IMR-90 (cell line): ENCODE measurements at regions of chr18 and their contacts with region 1.

Region 1: GRCh38 chr18:22314420-22314819 is 103.3 kb downstream of the CTAGE1 start:
- DNase-seq: peak; percentile 97
- ATAC-seq: peak; percentile 96
- H3K4me3 ChIP-seq: peak overlapping the region; percentile 12; the same call in 1 of the 2 replicates
- H3K27ac ChIP-seq: peak overlapping the region; percentile 85
- H3K4me1 ChIP-seq: peaks cover 12% of the 10 kb centered on the region
- H3K27me3 ChIP-seq: no peaks in the 10 kb centered on the region
- CTCF ChIP-seq: no peak
- POLR2A ChIP-seq: no peak; the same call in 1 of the 2 replicates
- RAD21 ChIP-seq: peak; percentile 32

Region 2: DNA sequence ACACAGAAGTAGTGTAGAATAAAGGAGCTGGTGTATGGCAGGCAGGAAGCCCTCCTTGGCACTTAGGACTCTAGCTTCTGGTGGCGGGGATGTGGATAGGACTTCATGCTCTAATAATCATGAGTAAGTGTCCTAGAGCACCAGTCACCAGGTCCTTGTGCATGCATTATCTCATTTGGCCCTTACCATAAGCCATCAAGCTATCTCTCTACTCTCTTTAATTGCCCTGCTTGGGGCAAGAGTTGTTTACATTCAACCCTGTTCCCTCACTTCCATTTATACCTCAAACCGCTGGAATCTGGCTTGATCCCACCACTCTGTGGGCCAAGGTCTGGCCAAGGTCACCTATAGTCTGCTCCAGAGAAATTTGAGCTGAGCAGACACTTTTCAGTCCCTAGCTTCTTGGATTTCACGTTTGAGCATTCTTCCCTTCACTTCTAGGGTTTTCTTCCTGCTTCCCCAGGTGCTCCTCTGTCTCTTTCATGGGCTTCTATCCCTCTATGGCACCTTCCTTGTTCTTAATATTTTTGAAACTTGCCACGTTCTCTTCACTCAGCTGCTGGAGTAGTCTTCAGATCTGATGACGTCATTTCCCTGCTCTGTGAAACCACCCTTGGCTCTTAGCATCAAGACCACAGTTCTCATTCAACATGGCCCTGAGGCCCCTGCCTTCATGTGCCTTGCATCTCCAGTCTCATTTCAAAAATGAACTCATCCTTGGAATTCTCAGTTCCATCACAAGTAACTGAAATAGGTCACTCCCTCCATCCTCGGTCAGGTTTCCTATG is 239.9 kb before region 1 on chr18:
- CTCF ChIA-PET with region 1: no interaction called
- POLR2A ChIA-PET with region 1: no interaction called
- dilution Hi-C with region 1: no loop called
- in situ Hi-C with region 1: no loop called
- intact Hi-C with region 1: no loop called
- DNase-seq: no peak
- ATAC-seq: no peak
- H3K4me3 ChIP-seq: no peak overlapping the region
- H3K27ac ChIP-seq: no peak overlapping the region
- H3K4me1 ChIP-seq: no peaks in the 10 kb centered on the region
- H3K27me3 ChIP-seq: peaks cover 20% of the 10 kb centered on the region
- CTCF ChIP-seq: no peak
- POLR2A ChIP-seq: no peak
- RAD21 ChIP-seq: no peak

Region 3: GRCh38 chr18:22194151-22194598 is 120.2 kb before region 1 on chr18:
- CTCF ChIA-PET with region 1: no interaction called
- POLR2A ChIA-PET with region 1: no interaction called
- dilution Hi-C with region 1: no loop called
- in situ Hi-C with region 1: no loop called
- intact Hi-C with region 1: loop called (anchors 5 kb)
- DNase-seq: no peak
- ATAC-seq: no peak
- H3K4me3 ChIP-seq: no peak overlapping the region
- H3K27ac ChIP-seq: no peak overlapping the region
- H3K4me1 ChIP-seq: peaks cover 6% of the 10 kb centered on the region
- H3K27me3 ChIP-seq: no peaks in the 10 kb centered on the region
- CTCF ChIP-seq: no peak
- POLR2A ChIP-seq: no peak
- RAD21 ChIP-seq: no peak

Region 4: DNA sequence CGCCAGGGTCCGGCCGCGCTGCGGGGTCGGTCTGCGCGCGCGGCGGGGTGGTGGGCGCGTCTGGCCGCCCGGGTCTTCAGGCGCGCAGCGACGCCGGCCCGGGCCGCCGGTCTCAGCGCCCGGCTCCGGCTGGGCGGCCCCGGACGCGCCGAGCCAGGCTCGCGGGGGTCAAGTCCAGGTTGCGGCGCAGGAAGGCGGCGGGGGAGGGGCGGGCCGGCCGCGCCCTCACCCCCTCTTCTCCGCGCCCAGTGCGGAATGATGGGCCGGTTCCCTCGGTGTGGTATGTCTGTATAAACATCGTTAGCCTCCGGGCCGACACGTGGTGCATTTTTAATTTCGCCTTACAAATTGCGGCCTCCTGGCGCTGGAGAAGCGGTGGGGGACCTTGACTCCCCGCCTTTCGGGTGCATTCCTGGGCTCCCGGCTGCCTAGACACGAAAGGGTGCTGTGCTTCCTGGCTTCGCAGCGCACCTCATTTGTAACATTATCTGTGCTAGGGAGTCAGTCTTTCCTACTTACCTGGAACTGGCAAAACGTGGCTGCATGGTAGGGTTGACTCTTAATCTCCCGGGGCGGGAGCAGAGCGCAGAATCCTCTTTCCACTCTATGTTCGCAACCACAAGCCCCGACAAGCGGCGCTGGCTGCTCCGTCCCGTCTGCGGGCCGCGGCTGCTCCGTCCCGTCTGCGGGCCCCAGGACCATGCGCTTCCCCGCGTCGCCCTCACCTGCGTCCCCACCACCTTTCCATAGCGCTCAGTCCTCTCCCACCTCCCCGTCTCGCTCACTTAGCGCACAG is 34.3 kb after region 1 on chr18:
- CTCF ChIA-PET with region 1: no interaction called
- POLR2A ChIA-PET with region 1: no interaction called
- dilution Hi-C with region 1: no loop called
- in situ Hi-C with region 1: no loop called
- intact Hi-C with region 1: loop called (anchors 2 kb)
- DNase-seq: peak; percentile 42
- ATAC-seq: peak; percentile 77
- H3K4me3 ChIP-seq: peak overlapping the region; percentile 25
- H3K27ac ChIP-seq: peak overlapping the region; percentile 74
- H3K4me1 ChIP-seq: peaks cover 22% of the 10 kb centered on the region
- H3K27me3 ChIP-seq: no peaks in the 10 kb centered on the region
- CTCF ChIP-seq: no peak
- POLR2A ChIP-seq: no peak
- RAD21 ChIP-seq: no peak

Region 5: DNA sequence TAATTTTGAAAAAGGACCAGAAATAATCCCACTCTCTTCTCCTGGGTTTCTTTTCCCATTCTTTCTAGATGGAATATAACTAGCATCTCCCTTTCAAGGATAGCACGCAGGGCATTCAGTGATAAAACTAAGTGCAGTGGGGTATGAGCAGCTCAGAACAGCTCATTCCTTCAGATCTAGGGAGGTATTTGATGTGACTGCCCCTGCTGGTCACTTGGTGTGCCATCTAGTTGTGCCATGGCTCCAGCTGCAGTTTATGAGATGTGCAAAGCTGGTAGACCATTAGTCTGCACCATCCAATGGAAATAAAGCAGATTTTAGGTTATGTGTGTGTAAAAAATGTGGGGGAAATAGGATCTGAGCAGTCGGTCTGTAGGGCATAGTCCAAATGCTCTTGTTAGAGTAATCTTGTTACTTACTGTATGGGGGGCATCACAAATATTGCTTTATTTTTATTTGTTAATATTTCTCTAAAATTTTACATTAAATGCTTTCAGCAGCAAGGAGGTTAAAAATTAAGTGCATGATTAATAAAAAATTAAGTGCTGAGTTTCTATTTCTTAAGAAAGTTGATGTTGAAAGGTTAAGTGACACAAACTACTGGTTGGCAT is 64.4 kb after region 1 on chr18:
- CTCF ChIA-PET with region 1: no interaction called
- POLR2A ChIA-PET with region 1: no interaction called
- dilution Hi-C with region 1: no loop called
- in situ Hi-C with region 1: no loop called
- intact Hi-C with region 1: loop called (anchors 10 kb)
- DNase-seq: peak; percentile 30
- ATAC-seq: peak; percentile 66; the same call in 1 of the 2 replicates
- H3K4me3 ChIP-seq: no peak overlapping the region
- H3K27ac ChIP-seq: no peak overlapping the region
- H3K4me1 ChIP-seq: no peaks in the 10 kb centered on the region
- H3K27me3 ChIP-seq: peaks cover 4% of the 10 kb centered on the region
- CTCF ChIP-seq: peak; percentile 37
- POLR2A ChIP-seq: no peak
- RAD21 ChIP-seq: peak; percentile 42; the same call in 1 of the 2 replicates

Region 6: DNA sequence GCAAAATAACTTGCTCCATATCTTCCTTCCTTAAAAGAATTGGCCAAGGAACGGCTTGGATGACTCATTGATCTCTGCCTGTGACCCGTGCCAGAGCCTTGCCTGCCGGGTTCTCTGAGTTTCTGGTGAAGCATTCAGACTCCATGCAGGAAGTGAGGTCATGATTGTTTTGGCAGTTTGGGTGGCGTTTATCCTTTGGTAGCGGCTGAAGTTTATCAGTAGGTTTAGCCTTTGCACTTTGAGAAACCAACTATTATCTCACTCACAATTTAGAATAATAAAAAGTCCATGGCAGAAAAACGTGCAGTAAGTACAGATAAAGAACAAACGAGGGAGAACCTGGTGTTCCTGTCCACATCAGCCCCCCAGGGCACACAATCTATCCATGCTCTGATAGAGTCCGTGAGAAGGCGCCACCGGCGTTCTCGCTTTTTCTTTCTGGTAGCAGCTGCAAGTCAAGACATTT is 118.3 kb after region 1 on chr18:
- CTCF ChIA-PET with region 1: no interaction called
- POLR2A ChIA-PET with region 1: no interaction called
- dilution Hi-C with region 1: no loop called
- in situ Hi-C with region 1: no loop called
- intact Hi-C with region 1: loop called (anchors 10 kb)
- DNase-seq: peak; percentile 97
- ATAC-seq: peak; percentile 80
- H3K4me3 ChIP-seq: no peak overlapping the region
- H3K27ac ChIP-seq: peak overlapping the region; percentile 38
- H3K4me1 ChIP-seq: peaks cover 18% of the 10 kb centered on the region
- H3K27me3 ChIP-seq: no peaks in the 10 kb centered on the region
- CTCF ChIP-seq: no peak
- POLR2A ChIP-seq: no peak
- RAD21 ChIP-seq: peak; percentile 29; the same call in 1 of the 2 replicates